Mammary epithelial cell (primary cell): ENCODE measurements at regions of chr1 and their contacts with region 1.

Region 1: GRCh38 chr1:171403371-171403770 is 82.0 kb upstream of the PRRC2C start:
- DNase-seq: peak; percentile 52
- H3K4me3 ChIP-seq: no peak overlapping the region
- H3K27ac ChIP-seq: peak overlapping the region; percentile 1
- H3K4me1 ChIP-seq: peaks cover 13% of the 10 kb centered on the region
- H3K27me3 ChIP-seq: no peaks in the 10 kb centered on the region
- CTCF ChIP-seq: no peak

Region 2: DNA sequence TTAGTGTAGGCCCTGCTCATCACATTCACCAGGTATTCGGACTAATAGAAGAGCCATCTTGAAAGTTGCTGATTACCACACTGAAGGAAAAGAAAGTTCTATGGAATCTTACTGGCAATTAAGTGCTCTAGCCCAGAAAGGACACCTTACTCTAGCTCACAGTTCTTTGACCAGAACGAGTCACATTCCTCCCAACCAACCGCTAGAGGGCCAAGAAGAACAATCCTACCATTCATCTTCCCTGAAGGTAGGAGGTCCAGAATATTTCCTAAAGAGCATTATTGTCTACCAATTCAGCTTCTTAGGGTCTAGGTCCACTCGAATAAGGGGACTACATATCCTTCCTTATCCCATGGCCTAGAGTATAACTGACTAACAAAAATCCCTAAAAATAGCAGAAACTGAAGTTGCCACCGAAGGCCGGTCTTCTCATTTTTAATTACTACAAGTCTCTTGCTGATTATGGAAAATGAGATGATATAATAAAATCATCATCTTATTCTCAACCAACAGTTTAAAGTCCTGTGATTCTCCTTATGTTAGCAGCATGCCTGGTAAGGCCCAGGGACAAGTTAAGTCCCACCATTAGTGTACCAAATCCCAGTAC is 157.8 kb before region 1 on chr1:
- CTCF ChIA-PET with region 1: no interaction called
- dilution Hi-C with region 1: no loop called
- in situ Hi-C with region 1: no loop called
- intact Hi-C with region 1: loop called (anchors 2 kb)
- DNase-seq: peak; percentile 39
- H3K4me3 ChIP-seq: no peak overlapping the region
- H3K27ac ChIP-seq: no peak overlapping the region
- H3K4me1 ChIP-seq: no peaks in the 10 kb centered on the region
- H3K27me3 ChIP-seq: no peaks in the 10 kb centered on the region
- CTCF ChIP-seq: peak; percentile 90 to 91